RWPE1 (cell line): ENCODE measurements at regions of chr10 and their contacts with region 1.

Region 1: GRCh38 chr10:59906417-59907202 is at the start of gene CCDC6:
- DNase-seq: peak; percentile 84
- H3K27ac ChIP-seq: peak within 1 kb of the TSS; percentile 89
- CTCF ChIP-seq: peak; percentile 85

Region 2: DNA sequence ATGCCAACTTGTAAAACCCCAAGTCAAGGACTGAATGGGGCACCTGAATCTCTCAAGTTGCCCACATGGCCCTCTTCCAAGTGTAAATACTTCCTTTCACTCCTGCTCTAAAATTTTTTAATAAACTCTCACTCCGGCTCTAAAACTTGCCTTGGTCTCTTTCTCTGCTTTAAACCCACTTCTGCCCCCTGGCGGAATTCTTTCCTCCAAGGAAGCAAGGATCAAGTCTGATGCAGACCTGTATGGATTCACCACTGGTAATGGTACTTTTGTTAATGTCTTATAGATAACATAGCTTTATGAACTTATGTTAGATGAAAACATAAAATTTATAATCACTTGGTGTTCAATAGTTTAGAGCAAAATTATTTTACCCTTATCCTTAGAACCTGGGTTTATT is 230.8 kb before region 1 on chr10:
- CTCF ChIA-PET with region 1: no interaction called
- POLR2A ChIA-PET with region 1: no interaction called
- DNase-seq: no peak
- H3K27ac ChIP-seq: no peak overlapping the region
- CTCF ChIP-seq: no peak

Region 3: DNA sequence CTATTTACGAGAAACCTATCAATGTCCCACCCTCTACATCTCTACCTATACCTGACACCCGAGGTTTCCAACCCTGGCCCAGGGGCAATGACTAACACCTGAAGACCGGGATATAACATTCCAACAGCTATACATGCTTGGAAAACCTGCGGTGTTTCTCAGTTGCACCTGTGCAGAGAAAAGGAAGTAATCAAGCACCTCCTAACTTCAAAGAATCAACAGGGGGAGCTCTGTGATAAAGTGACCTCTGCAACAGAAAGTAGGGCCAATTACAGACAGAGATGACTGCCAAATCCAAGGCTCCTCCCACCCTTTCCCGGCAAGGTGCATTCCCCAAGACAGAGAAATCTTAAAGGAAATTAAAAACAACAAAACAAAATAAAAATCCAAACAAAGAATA is 41.5 kb before region 1 on chr10:
- CTCF ChIA-PET with region 1: interaction called, 8 read pairs
- POLR2A ChIA-PET with region 1: interaction called, 12 read pairs
- DNase-seq: peak; percentile 85
- H3K27ac ChIP-seq: no peak overlapping the region
- CTCF ChIP-seq: no peak